Breast epithelium (tissue), 4 donors: ENCODE measurements at regions of chr9 and their contacts with region 1.

Region 1: DNA sequence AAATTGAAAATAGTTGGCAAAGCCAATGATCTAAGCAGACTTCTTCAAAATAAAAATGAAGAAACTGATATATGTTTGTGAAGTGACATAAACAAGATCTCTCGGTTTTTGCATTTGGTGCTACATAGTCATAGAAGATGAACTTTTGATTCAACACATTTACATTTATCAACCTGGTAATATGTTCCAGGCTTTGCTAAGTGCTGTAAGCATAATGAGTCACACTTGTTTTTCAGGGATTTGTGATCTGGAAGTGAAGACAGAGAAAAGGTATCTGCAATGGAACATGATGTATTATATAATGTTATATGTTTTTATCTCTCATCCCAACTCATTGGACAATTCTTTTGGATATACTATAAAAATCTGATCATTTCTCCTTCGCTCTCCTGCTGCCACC is 801.4 kb downstream of the BRINP1 start:
- DNase-seq: no peak
- H3K4me3 ChIP-seq: no peak overlapping the region
- H3K27ac ChIP-seq: no peak overlapping the region
- H3K4me1 ChIP-seq: no peaks in the 10 kb centered on the region
- H3K27me3 ChIP-seq: no peaks in the 10 kb centered on the region
- CTCF ChIP-seq: no peak
- POLR2A ChIP-seq: no peak

Region 2: DNA sequence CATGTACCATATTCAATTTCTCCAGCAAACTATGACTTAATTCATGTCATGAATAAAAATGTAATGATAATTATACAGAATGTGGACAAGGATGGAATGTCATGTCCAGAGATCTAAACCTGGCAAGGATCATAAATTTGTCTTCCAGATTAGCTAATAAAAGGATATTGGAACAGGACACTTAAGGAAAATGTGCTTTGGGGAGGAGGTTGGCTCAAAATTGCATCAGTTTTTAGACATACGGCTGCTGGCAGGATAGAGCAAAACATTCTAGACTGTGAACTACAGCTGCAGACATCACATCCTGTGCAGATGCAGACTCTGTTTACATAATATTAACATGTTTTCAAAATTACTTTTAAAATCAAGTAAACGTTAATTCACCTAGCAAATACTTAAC is 615.3 kb before region 1 on chr9:
- intact Hi-C with region 1: loop called (anchors 5 kb)
- DNase-seq: no peak
- H3K4me3 ChIP-seq: no peak overlapping the region
- H3K27ac ChIP-seq: no peak overlapping the region
- H3K4me1 ChIP-seq: no peaks in the 10 kb centered on the region
- H3K27me3 ChIP-seq: no peaks in the 10 kb centered on the region
- CTCF ChIP-seq: no peak
- POLR2A ChIP-seq: no peak